ENCODE measurements at regions of chr2 and their contacts with region 1.

Region 1: DNA sequence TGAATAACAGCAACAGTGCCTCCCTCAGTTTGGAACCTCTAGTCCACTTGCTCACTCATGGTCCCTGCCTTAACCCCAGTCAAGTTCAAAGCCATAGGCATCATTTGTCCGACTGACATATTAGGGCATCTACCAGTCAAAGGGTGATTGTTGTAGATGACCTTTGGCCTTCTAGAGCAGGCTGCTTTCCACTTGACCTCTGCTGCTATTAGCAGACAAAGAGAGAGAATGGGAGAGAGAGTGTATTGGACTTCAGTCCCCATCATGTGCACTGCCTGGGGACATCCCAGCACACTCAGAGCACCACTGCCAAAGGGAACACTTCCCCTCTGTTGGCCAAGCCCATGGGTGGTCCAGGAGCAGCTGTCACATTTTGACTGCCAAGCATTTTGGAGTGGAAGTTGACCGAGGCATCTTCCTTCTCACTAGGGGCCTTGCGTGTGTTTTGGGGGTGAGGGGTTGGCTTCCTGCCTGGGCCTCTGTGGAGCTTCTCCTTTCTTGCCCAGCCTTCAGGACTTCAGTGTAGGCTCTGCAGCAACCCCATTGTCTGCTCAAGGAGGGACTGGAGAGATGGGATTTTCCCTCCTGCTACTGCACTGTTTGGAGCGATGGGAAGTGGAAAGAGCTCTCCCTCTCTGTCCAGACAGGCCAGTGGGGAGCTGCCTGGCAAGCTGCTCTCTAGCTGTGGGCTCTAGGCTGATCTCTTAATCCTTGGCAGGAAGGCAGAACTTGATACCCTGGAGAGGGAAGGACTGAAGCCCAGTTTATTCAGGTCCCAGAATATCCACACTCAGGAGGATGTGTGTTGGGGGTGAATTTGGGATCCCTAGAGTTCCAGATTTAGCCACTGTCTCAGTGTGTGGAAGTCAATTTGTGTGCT is 68.1 kb downstream of the TMEM247 start:
- DNase-seq: peak; percentile 40
- ATAC-seq: no peak
- H3K4me3 ChIP-seq: peak overlapping the region; percentile 11 to 54 (median 30)
- H3K4me3 Mint-ChIP-seq: peak overlapping the region; percentile 71
- H3K27ac ChIP-seq: peak overlapping the region; percentile 74 to 75
- H3K27ac Mint-ChIP-seq: peak overlapping the region; percentile 93
- H3K4me1 ChIP-seq: peaks cover 81 to 87% of the 10 kb centered on the region in 2 donors
- H3K4me1 Mint-ChIP-seq: peaks cover 86% of the 10 kb centered on the region
- H3K27me3 ChIP-seq: no peaks in the 10 kb centered on the region
- H3K27me3 Mint-ChIP-seq: no peaks in the 10 kb centered on the region
- CTCF ChIP-seq: no peak

Region 2: GRCh38 chr2:46561731-46562450 is 14.4 kb after region 1 on chr2:
- CTCF ChIA-PET with region 1: interaction called, 10 read pairs
- POLR2A ChIA-PET with region 1: interaction called, 5 read pairs
- intact Hi-C with region 1: loop called (anchors 1 kb)
- DNase-seq: no peak
- ATAC-seq: no peak
- H3K4me3 ChIP-seq: peak overlapping the region in 2 of 5 experiments; percentile 2 to 50
- H3K4me3 Mint-ChIP-seq: peak overlapping the region; percentile 82
- H3K27ac ChIP-seq: peak overlapping the region; percentile 62 to 79
- H3K27ac Mint-ChIP-seq: peak overlapping the region; percentile 94
- H3K4me1 ChIP-seq: peaks cover 88 to 91% of the 10 kb centered on the region in 2 donors
- H3K4me1 Mint-ChIP-seq: peaks cover 91% of the 10 kb centered on the region
- H3K27me3 ChIP-seq: no peaks in the 10 kb centered on the region
- H3K27me3 Mint-ChIP-seq: no peaks in the 10 kb centered on the region
- CTCF ChIP-seq: no peak

Region 3: DNA sequence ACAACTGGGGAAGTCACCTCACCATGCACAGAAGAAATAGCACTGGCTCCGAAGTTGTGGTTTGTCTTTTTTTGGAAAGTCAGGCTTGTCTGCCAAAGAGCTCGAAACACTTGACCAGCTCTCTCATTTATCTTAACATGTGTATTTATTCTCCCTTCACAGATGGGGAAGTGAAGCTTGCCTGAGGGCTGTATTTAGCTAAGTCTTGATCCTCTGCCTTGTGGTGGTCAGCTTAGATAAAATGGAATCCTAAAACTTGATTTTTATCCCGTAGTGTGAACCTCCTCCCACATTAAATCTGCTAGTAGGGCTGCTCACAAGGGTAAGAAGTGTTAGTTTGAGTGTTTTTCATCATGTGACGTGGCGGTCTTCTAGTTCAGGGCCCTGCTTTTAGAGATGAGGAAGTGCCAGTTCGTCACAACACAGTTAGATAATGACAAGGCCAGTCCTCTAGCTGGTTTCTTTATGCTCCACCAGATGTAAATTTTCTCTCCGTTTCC is 21.6 kb after region 1 on chr2:
- CTCF ChIA-PET with region 1: no interaction called
- POLR2A ChIA-PET with region 1: interaction called, 20 read pairs
- intact Hi-C with region 1: loop called (anchors 1 kb)
- DNase-seq: peak; percentile 88
- ATAC-seq: peak; percentile 85
- H3K4me3 ChIP-seq: peak overlapping the region in 4 of 5 experiments; percentile 2 to 55 (median 16)
- H3K4me3 Mint-ChIP-seq: peak overlapping the region; percentile 86
- H3K27ac ChIP-seq: peak overlapping the region; percentile 95 to 98
- H3K27ac Mint-ChIP-seq: peak overlapping the region; percentile 100
- H3K4me1 ChIP-seq: peaks cover 100% of the 10 kb centered on the region in 2 donors
- H3K4me1 Mint-ChIP-seq: peaks cover 95% of the 10 kb centered on the region
- H3K27me3 ChIP-seq: no peaks in the 10 kb centered on the region
- H3K27me3 Mint-ChIP-seq: no peaks in the 10 kb centered on the region
- CTCF ChIP-seq: no peak